ENCODE measurements at regions of chr18 and their contacts with region 1.

Region 1: DNA sequence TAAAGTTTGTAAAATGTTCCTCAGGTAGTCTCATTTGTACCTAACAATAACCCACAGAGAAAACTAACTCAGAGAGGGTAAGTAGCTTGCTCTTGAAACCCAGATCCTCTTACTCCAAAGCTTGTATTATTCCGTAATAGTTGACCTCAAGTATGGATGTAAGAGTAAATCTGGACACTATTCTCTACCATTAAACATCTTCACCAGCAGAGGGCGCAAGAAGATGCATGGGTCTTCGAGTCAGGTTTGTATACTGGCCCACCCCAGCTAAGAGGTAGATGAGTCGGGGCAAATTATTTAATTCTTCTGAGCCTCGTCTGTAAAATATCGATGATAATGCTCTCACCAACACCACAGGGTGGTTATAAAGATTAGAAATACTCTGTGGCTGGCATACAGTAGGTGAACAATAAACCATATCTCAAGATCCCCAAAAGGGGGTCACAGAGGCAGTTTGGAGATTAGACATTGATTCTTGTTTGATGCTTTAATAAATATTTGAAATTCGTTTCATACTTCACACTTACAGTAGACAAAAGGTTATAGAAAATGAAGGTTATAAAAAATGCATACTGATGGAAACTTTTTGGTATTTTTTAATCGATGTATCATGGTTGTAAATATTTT is 3.5 kb upstream of the CABLES1 start:
- DNase-seq: peak; percentile 73
- H3K4me3 Mint-ChIP-seq: no peak overlapping the region
- H3K27ac Mint-ChIP-seq: no peak overlapping the region
- H3K4me1 Mint-ChIP-seq: peaks cover 11% of the 10 kb centered on the region
- H3K27me3 Mint-ChIP-seq: no peaks in the 10 kb centered on the region
- CTCF ChIP-seq: peak; percentile 88

Region 2: DNA sequence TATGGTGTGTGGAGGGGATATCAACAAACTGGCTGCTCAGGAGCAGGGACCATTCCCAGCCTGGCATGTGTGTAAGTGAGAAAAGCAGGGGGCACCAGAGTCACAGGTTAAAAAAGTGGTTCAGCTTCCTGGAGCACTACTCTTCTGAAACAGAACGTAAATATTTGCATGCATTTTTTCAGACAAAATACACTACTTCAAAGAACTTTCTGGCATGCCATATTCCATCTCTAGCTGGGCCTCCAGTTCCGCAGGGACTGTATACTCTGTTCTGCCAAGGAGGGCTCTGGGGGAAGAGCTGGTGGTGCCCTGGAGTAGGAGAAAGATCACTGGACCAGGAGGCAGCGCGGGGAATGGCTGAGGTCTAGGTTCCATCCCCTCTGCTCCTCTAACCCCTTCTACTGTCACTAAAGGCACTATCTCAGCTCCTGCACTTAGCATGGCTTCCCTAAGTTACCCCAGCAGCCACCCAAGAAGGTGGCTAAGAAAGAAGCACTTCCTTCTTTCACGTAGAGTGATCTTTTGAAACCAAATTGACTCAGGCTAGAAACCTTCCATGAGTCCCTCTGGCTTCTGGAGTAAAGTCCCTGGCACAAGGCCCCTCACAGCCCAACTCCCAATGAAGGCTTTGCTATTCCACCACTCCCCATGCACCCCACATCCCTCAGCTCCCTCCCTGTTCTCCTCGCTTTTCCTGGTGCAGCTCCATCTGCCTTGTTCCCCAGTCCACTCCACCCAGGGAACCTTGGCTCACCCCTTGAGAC is 54.1 kb before region 1 on chr18:
- CTCF ChIA-PET with region 1: interaction called, 5 read pairs
- intact Hi-C with region 1: loop called (anchors 5 kb)
- DNase-seq: peak; percentile 61
- H3K4me3 Mint-ChIP-seq: no peak overlapping the region
- H3K27ac Mint-ChIP-seq: no peak overlapping the region
- H3K4me1 Mint-ChIP-seq: peaks cover 16% of the 10 kb centered on the region
- H3K27me3 Mint-ChIP-seq: no peaks in the 10 kb centered on the region
- CTCF ChIP-seq: peak; percentile 58

Region 3: GRCh38 chr18:23228102-23229061 is 96.6 kb after region 1 on chr18:
- CTCF ChIA-PET with region 1: no interaction called
- intact Hi-C with region 1: loop called (anchors 5 kb)
- DNase-seq: no peak
- H3K4me3 Mint-ChIP-seq: peak overlapping the region; percentile 22
- H3K27ac Mint-ChIP-seq: peak overlapping the region; percentile 86
- H3K4me1 Mint-ChIP-seq: peaks cover 65% of the 10 kb centered on the region
- H3K27me3 Mint-ChIP-seq: no peaks in the 10 kb centered on the region
- CTCF ChIP-seq: no peak

Region 4: DNA sequence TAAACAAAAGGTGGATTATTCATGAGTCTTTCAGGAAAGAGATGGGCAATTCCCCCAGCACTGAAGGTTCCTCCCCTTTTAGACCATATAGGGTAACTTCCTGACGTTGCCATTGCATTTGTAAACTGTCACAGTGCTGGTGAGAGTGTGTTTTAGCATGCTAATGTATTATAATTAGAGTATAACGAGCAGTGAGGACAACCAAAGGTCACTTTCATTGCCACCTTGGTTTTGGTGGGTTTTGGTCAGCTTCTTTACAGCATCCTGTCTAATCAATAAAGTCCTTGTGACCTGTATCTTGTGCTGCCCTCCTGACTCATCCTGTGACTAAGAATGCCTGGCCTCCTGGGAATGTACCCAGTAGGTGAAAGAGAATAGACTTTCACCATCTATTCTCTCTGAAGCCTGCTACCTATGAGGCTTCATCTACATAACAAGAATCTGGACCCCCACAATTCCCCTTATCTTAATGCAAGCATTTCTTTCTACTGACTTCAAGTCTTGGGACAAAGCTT is 152.2 kb after region 1 on chr18:
- CTCF ChIA-PET with region 1: no interaction called
- intact Hi-C with region 1: loop called (anchors 1 kb)
- DNase-seq: peak; percentile 73
- H3K4me3 Mint-ChIP-seq: peak overlapping the region; percentile 3
- H3K27ac Mint-ChIP-seq: peak overlapping the region; percentile 89
- H3K4me1 Mint-ChIP-seq: peaks cover 71% of the 10 kb centered on the region
- H3K27me3 Mint-ChIP-seq: no peaks in the 10 kb centered on the region
- CTCF ChIP-seq: no peak

Region 5: GRCh38 chr18:23330423-23330822 is 198.6 kb after region 1 on chr18:
- CTCF ChIA-PET with region 1: interaction called, 7 read pairs
- intact Hi-C with region 1: loop called (anchors 5 kb)
- DNase-seq: no peak
- H3K4me3 Mint-ChIP-seq: peak overlapping the region; percentile 68
- H3K27ac Mint-ChIP-seq: peak overlapping the region; percentile 86
- H3K4me1 Mint-ChIP-seq: peaks cover 32% of the 10 kb centered on the region
- H3K27me3 Mint-ChIP-seq: no peaks in the 10 kb centered on the region
- CTCF ChIP-seq: no peak

Region 6: DNA sequence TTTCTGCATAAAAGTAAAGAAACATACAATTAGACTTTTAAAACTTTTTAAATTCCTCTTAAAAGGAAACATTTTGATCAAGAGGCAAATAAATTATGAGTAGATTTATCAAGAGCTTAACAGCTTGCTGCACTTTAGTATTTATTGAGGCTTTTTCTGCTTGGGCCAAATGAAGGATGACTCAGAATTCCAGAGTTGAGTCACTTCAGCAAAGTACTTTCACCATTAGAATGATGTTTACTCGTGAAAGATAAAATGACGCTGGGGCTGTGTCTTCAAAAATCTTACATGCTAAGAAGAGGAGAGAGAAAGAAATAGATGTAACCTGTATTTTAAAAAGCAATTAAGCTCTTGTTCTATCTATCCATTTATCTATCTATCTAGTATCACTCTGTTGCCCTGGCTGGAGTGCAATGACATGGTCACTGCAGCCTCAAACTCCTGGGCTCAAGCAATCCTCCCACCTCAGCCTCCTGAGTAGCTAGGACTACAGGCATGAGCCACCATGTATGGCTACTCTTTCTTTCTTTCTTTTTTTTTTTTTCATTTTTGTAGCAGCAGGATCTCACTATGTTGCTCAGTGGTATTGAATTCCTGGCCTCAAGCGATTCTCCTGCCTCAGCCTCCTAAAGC is 246.0 kb after region 1 on chr18:
- CTCF ChIA-PET with region 1: interaction called, 17 read pairs
- intact Hi-C with region 1: loop called (anchors 2 kb)
- DNase-seq: no peak
- H3K4me3 Mint-ChIP-seq: no peak overlapping the region
- H3K27ac Mint-ChIP-seq: peak overlapping the region; percentile 25
- H3K4me1 Mint-ChIP-seq: peaks cover 33% of the 10 kb centered on the region
- H3K27me3 Mint-ChIP-seq: no peaks in the 10 kb centered on the region
- CTCF ChIP-seq: no peak

Region 7: GRCh38 chr18:23412351-23412964 is 280.7 kb after region 1 on chr18:
- CTCF ChIA-PET with region 1: interaction called, 18 read pairs
- intact Hi-C with region 1: loop called (anchors 5 kb)
- DNase-seq: no peak
- H3K4me3 Mint-ChIP-seq: no peak overlapping the region
- H3K27ac Mint-ChIP-seq: no peak overlapping the region
- H3K4me1 Mint-ChIP-seq: peaks cover 9% of the 10 kb centered on the region
- H3K27me3 Mint-ChIP-seq: no peaks in the 10 kb centered on the region
- CTCF ChIP-seq: no peak

Region 8: DNA sequence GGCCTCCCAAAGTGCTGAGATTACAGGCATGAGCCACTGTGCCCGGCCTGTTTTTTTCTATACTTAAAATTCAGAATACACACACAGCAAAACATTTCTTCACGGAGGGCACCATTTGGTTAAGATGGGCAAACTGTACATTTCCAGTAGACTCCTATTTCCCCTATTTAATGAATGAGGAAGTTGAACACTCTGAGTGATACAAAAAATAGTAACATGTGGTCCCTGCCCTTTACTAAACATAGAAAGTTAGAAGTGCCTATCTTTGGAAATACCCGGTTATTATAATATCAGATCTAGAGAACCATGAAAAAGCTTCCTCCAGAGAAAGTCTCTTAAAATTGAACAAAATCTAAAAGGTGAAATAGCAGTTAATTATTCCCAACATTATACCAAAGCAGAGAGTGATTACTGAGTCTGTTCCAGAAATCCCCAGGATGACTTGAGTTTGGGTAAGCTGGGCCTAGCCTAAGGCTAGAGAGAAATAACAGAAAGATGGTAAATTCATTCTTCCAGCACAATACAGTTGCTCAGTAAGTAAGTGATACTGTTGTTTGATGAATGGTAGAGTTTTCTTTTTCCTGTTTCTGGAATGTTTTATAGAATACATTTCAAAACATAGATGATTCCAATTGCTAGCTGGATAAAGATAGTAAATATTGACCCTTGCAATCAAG is 348.2 kb after region 1 on chr18:
- CTCF ChIA-PET with region 1: no interaction called
- intact Hi-C with region 1: no loop called
- DNase-seq: no peak
- H3K4me3 Mint-ChIP-seq: no peak overlapping the region
- H3K27ac Mint-ChIP-seq: no peak overlapping the region
- H3K4me1 Mint-ChIP-seq: no peaks in the 10 kb centered on the region
- H3K27me3 Mint-ChIP-seq: no peaks in the 10 kb centered on the region
- CTCF ChIP-seq: no peak